ENCODE measurements at regions of chr17 and their contacts with region 1.

Region 1: DNA sequence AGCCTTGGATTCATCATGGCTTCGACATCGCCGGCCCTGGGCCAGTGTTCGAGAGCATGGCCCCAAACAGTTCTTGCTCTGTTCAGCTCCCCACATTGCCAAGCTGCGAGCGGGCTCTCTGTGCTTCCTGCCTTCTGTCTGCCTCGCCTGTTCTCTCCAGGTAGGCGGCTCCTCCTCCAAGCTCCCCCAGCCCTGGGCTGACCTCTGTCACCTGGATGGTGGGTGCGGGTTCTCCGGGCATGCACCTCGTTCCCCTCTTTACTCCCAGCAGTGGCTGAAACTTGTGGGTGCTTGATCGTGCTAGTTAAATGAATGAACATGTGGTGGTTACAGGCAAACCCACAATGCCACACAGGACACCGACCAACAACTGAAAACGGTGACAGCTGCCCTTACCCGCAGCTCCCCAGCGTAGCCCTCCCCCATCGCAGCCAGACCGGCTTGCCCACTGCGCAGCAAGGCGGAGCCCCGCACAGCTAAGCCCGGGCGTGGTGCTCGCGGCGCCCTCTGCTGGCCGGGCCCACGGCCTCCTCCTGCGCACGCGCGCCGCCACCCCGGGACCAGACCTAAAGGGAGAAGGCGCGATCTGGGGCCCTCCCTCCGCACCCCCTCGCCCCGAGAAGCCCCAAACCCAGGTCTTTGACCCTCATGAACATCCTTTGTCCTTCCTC is 23.0 kb upstream of the EIF1 start:
- DNase-seq: no peak
- H3K4me3 ChIP-seq: peak overlapping the region; percentile 55
- CTCF ChIP-seq: peak; percentile 90

Region 2: GRCh38 chr17:40559954-40560591 is 1105.6 kb before region 1 on chr17:
- CTCF ChIA-PET with region 1: interaction called, 10 read pairs
- POLR2A ChIA-PET with region 1: no interaction called
- DNase-seq: peak; percentile 77
- H3K4me3 ChIP-seq: no peak overlapping the region
- CTCF ChIP-seq: peak; percentile 97

Region 3: DNA sequence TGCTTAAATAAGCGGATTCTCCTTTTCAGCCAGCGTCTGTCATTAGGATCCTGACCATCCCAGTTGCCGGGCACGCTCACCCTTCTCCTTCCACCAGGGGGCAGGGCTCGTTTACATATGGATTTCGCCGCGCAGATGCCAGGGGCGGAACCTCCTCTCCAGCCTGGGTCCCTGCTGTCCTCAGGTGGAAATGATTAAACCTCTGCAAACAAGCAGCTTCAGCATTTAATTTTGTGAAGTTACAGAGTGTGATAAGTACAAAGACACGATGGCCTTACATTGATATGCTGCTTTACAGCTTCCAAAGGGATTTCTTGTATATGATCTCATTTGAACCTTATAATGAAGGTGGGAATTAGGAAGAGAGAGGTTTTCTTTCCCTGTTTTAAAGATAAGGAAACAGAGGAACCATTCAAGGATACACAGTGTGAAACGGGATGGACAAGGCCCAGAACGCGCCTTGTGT is 862.1 kb before region 1 on chr17:
- CTCF ChIA-PET with region 1: interaction called, 325 read pairs
- POLR2A ChIA-PET with region 1: no interaction called
- DNase-seq: no peak
- H3K4me3 ChIP-seq: no peak overlapping the region
- CTCF ChIP-seq: peak; percentile 92

Region 4: GRCh38 chr17:40854159-40854814 is 811.4 kb before region 1 on chr17:
- CTCF ChIA-PET with region 1: interaction called, 211 read pairs
- POLR2A ChIA-PET with region 1: no interaction called
- DNase-seq: peak; percentile 80
- H3K4me3 ChIP-seq: no peak overlapping the region
- CTCF ChIP-seq: no peak

Region 5: DNA sequence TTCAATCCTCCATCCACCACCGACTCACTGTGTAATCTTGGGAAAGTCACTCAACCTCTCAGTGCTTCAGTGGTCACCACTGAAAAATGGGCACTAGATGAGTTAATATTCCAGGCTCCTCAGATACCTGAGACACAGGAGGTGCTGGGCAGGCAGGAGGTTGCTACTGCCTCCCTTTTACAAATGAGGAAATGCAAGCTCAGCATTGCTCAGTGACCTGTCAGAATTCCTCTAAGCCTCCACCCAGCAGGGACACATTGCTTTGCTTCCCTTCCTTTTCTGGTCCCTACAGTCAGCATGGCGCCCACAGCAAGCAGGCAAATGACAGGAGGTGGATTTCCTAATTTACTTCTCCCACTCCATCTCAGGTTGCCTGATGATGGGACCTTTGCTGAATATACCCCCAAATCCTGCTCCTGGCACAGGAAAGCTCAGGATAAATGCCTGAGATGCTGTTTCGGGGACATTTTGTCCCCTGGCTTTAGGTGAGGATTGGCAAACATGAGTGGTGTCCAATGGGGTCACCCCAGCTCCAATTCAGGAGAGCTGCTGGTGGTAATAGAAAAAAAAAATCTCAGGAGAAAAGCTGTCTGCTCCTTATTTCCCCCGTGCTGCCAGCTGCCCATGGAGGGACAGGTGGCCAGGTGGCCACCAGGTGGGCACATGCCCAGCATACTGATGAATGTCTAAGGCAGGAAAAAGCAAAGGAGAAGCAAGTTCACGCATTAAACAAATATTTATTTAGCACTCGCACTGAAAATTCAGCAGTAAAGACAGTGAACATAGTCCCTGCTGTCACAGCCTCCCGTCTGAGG is 155.2 kb before region 1 on chr17:
- CTCF ChIA-PET with region 1: interaction called, 10 read pairs
- POLR2A ChIA-PET with region 1: no interaction called
- DNase-seq: no peak
- H3K4me3 ChIP-seq: no peak overlapping the region
- CTCF ChIP-seq: no peak

Region 6: DNA sequence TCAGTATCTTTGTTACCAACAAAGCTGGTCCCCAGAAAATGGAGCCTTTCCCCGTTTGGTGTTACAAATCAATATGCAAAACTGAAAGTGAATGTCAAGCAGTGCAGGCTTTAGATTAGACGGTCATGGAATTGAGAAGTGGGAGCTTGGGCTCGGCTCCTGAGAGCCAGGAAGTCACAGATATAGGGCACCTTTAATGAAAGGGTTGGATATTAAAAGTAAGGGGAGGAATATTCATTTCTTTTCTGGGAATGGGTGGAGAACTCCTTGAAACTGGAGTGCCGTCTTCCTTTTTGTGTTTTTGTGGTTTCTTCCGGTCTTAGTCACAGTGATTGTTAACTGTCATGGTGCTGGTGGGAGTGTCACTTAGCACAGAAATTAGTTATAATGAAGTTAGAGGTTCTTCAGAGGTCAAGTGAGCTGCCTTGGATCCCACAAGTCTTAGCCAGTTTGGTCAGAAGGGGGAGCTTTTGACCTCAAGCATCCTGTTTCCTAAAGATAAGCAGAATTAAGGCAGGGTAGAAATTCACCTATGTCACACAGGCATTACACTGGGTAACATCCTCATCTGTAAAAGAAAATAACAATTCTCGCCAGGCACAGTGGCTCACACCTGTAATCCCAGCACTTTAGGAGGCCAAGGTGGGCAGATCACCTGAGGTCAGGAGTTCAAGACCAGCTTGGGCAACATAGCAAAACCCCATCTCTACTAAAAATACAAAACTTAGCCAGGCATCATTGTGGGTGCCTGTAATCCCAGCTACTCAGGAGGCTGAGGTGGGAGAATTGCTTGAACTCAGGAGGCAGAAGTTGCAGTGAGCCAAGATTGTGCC is 13.4 kb after region 1 on chr17:
- CTCF ChIA-PET with region 1: interaction called, 125 read pairs
- POLR2A ChIA-PET with region 1: interaction called, 3 read pairs
- DNase-seq: no peak
- H3K4me3 ChIP-seq: no peak overlapping the region; the same call in 1 of the 2 replicates
- CTCF ChIP-seq: no peak

Region 7: GRCh38 chr17:42512626-42513250 is 847.0 kb after region 1 on chr17:
- CTCF ChIA-PET with region 1: no interaction called
- POLR2A ChIA-PET with region 1: no interaction called
- DNase-seq: no peak
- H3K4me3 ChIP-seq: no peak overlapping the region
- CTCF ChIP-seq: no peak

Measured in AG04449 (cell line).